ENCODE measurements at regions of chr6 and their contacts with region 1.

Region 1: DNA sequence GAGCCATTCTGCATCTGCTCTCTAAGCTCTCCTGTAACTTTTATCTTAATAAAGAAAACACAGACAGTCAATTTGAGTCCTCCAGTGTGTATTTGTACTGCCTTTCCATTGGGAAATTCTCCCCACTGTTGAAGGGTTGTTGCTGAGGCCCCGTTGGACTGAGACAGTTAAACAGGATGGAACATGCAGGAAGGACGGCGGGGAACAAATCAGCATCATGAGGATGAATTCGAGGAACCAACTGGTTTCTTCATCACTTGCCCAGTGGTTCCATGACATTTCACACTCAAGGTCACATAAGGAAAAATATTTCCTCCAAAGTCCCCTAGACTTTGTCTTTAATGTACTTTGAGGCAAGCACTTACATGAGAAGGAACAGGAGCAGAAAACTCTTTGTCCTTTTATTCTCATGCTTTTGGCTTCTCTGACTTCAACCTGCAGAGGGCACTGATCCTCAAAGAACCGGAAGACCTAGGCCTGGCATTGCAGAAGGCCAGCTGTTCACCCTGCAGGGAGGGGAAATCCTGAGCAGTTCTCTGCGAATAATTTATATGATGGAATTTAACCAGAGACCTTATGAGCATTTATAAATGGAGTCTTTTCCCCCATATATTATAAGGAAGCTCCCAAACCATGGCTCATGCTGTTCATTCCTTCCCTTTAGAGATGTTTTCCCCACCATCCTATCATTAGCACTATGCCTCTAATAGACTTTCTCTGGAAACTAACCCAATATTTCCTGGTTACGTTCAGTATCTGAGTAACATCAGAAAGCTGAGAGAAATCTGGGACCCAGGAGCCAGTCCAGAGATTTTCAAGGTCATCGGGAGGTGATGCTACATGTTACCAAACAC is 55.2 kb upstream of the ADGRF1 start:
- DNase-seq: peak; percentile 56
- CTCF ChIP-seq: peak; percentile 75

Region 2: GRCh38 chr6:46972531-46972930 is 124.8 kb before region 1 on chr6:
- in situ Hi-C with region 1: no loop called
- DNase-seq: no peak
- CTCF ChIP-seq: no peak

Region 3: DNA sequence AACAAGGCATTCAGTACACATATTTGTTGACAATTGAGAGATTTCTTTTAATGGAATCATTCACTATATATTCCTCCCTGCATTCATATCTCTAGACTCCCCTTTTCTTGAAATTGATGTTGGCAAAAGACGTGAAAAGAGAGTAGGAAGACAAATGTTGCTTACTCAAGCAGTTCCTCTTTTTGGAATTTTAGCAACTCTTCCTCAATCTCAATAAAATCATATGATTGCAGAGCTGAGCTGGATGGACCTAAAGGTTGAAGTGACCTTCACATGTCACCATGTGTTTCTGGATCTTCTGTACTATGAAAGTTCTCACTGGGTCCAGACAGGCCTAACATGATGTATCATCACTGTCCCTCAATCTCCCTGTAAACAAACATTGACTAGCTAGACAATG is 73.7 kb before region 1 on chr6:
- in situ Hi-C with region 1: no loop called
- DNase-seq: no peak
- CTCF ChIP-seq: no peak

Region 4: GRCh38 chr6:47247227-47247797 is 150.0 kb after region 1 on chr6:
- in situ Hi-C with region 1: no loop called
- DNase-seq: peak; percentile 20
- CTCF ChIP-seq: no peak

Region 5: DNA sequence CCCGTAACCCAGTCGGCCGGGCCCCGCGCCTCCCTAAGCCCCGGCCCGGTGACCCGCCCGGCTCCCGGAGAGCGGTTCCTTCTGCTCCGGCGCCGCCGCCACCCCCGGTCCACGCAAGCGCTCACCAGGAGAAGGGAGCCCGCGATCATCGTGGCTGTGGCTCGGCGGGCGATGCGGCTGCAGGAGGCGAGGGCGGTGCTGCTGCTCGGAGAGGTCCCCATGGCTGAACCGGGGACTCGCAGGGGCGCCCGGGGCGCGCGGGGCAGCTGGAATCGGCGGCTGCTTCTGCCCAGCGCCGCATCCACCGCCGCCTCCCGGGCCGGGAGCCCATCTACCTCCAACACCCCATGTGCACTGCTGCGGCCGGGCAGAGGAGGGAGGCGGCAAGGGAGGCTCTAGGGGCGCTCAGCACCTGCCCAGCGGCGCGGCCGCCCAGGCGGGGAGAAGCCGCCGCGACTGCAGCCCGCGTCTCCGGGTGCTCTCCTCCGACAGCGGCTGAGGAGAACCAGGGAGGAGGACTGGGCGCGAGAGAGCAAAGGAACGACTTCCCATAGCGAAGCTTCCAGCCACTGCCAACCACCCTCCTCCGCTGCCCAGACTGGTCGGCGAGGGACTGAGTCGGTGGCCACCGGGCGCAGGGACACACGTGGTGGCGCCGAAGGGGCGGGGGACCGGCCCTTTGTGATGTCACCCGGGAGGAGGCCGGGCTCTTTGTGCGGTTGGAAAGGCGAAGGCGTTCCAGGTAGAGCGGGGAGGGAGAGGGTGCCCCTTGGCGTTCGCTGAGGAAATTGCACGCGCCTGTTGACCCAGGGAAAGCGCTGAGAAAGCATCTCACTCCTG is 212.2 kb after region 1 on chr6 and contains the start of gene TNFRSF21:
- in situ Hi-C with region 1: loop called (anchors 5 kb)
- DNase-seq: peak; percentile 91
- CTCF ChIP-seq: peak; percentile 93